ENCODE measurements at regions of chr12 and their contacts with region 1.

Region 1: GRCh38 chr12:12562585-12563261 is at the start of gene DUSP16:
- DNase-seq: peak; percentile 87 to 92
- ATAC-seq: peak; percentile 88 to 89
- H3K4me3 ChIP-seq: peak within 1 kb of the TSS; percentile 64 to 90 (median 76)
- H3K27ac ChIP-seq: peak within 1 kb of the TSS; percentile 89 to 100 (median 98)
- H3K4me1 ChIP-seq: peaks cover 22 to 29% of the 10 kb centered on the region in 2 donors
- H3K27me3 ChIP-seq: no peaks in the 10 kb centered on the region
- CTCF ChIP-seq: peak in 2 of 5 experiments; percentile 19 to 46
- POLR2A ChIP-seq: peak; percentile 86 to 94
- total RNA-seq, gene DUSP16: 10.9 to 15.7 (median 13.3) TPM

Region 2: GRCh38 chr12:10716704-10717315 is 1845.9 kb before region 1 on chr12:
- in situ Hi-C with region 1: no loop called
- intact Hi-C with region 1: loop called (anchors 5 kb)
- DNase-seq: peak; percentile 91 to 92
- ATAC-seq: peak; percentile 60 to 63
- H3K4me3 ChIP-seq: peak overlapping the region; percentile 62 to 99 (median 87)
- H3K27ac ChIP-seq: peak overlapping the region; percentile 97 to 100 (median 98)
- H3K4me1 ChIP-seq: peaks cover 48 to 68% of the 10 kb centered on the region in 2 donors
- H3K27me3 ChIP-seq: no peaks in the 10 kb centered on the region
- CTCF ChIP-seq: no peak
- POLR2A ChIP-seq: peak; percentile 75 to 95

Region 3: DNA sequence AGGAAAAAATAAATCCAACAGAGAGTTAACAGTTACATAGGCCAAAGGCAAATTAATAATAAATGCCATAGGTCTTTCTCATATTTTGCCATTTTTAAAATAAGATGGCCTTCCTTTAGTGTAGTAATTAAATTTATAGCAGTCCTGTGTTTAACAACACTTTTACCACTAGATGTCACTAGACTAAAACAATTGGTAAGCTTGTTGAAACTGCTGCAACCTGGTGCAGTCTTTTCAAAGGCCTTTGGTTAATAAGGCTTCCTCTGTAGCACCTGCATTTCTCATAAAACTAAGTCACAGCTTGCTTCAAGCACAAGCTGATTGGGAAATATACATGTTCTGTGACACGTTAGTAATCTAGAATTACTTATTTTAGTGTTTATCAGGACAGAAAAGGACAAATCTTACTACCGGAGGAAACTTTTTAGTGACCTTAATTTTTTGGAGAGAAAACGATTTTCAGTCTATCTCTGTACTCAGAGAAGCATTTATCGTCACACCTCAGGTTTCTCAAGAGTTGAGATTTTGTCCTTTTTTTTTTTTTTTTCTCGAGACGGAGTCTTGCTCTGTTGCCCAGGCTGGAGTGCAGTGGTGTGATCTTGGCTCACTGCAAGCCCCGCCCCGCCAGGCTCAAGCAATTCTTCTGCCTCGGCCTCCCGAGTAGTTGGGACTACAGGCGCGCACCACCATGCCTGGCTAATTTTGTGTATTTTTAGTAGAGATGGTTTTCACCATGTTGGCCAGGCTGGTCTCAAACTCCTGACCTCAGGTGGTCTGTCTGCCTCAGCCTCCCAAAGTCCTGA is 185.9 kb before region 1 on chr12:
- in situ Hi-C with region 1: loop called (anchors 5 to 10 kb)
- intact Hi-C with region 1: loop called (anchors 1 kb)
- DNase-seq: no peak
- ATAC-seq: peak; percentile 83 to 98
- H3K4me3 ChIP-seq: no peak overlapping the region
- H3K27ac ChIP-seq: no peak overlapping the region
- H3K4me1 ChIP-seq: peaks cover 0 to 12% of the 10 kb centered on the region in 2 donors
- H3K27me3 ChIP-seq: no peaks in the 10 kb centered on the region
- CTCF ChIP-seq: peak; percentile 65 to 86 (median 71)
- POLR2A ChIP-seq: no peak

Region 4: DNA sequence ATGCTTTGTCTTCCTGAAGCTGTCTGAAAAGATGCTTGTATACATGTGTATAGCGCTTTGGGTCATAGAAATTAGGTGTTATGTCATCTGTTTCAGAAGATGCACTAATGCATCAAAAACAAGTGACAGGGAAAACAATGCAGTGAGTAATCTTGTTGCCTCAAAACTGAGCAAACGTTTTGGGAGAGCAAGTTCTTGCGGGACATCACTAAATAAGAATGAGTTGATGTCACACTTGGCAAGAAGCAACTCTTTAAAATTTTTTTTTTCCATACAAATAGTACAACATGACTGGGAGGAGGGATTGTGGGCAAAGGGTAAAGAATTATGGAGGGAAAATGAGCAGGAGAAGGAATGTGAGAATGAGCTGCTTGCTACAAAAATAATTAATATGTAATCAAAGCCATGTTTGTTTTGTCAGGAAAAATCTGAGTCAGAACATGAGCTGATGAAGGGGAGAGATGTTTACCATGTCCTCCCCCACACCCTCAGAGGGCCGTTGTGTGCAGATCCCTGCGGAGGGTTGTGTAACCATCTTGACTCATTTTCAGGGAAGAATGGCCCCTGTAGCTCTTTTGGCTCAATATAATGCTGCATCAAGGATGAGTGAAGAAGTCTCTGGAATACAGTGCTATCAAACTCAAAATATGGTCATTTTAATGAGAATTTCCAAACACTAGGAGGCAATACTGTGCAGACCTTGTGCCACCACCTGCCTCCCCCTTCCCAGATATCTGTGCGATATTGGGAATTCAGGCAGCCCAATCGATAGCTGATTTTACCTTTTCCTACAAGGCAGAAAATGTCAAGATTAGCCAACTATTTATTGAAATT is 164.5 kb before region 1 on chr12:
- in situ Hi-C with region 1: no loop called
- intact Hi-C with region 1: loop called (anchors 5 kb)
- DNase-seq: peak; percentile 52 to 70
- ATAC-seq: peak; percentile 89 to 93
- H3K4me3 ChIP-seq: no peak overlapping the region
- H3K27ac ChIP-seq: peak overlapping the region; percentile 61 to 72 (median 64)
- H3K4me1 ChIP-seq: peaks cover 10 to 17% of the 10 kb centered on the region in 2 donors
- H3K27me3 ChIP-seq: no peaks in the 10 kb centered on the region
- CTCF ChIP-seq: no peak
- POLR2A ChIP-seq: no peak

Region 5: DNA sequence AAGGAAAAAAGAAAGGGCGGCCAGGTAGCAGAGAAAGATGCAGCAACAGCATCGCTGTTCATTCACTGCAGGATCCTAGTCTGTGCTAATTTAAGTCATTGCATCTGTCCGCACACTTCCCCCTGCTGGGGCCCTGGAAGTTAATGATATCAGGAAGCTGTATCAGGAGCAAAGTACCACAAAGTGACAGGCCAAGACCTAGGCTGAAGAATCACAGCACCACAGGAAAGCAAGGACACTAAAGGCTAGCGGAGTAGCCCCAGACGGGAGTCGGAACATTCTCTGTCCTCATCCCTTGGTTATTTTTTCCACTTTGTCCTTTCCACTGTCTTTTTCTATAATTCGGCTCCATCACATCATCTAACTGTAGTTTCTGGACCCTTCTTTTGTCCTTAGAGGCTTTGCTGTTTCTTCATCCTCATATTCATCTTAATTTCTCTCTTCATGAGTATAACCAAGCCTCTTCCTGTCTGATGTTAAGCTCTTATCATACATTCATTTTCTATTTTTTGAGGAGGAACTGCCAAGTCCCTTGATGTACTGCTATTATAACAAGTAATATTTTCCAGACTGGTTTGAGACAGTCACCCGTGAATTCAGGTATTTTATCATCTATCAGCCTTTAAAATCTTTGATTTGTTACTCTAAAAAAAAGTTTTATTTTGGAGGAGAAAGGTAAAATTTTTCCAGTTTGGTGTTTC is 28.4 kb before region 1 on chr12:
- in situ Hi-C with region 1: no loop called
- intact Hi-C with region 1: loop called (anchors 2 kb)
- DNase-seq: no peak
- ATAC-seq: peak in 1 of 2 donors; percentile 16
- H3K4me3 ChIP-seq: no peak overlapping the region
- H3K27ac ChIP-seq: peak overlapping the region; percentile 73 to 85 (median 82)
- H3K4me1 ChIP-seq: peaks cover 68 to 77% of the 10 kb centered on the region in 2 donors
- H3K27me3 ChIP-seq: no peaks in the 10 kb centered on the region
- CTCF ChIP-seq: no peak
- POLR2A ChIP-seq: no peak

Region 6: DNA sequence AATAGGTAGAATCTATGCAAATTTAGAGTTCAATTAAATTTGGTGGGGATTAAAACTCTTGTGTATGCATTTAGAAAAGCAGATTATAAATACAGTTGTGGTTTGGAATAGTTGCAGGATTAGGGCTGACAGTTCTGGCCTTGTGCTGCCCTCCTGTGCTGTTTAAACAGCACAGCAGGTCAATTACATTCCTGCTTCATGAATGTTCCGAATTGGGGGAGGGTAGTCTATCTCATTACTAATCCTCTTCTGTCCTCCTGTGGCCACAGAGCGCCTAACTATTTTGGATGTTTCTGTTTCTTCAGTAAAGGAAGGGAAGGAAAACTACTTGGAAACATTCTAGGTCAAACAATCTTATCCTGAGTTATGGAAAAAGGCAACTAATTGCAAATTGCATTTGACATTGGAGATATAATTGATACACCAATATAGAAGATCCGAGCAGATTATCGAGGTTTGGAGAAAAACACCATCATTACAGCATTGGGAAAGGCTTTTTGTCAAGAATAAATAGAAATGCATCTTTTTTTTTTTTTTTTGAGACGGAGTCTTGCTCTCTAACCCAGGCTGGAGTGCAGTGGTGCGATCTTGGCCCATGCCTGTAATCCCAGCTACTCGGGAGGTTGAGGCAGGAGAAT is 142.0 kb after region 1 on chr12:
- in situ Hi-C with region 1: no loop called
- intact Hi-C with region 1: loop called (anchors 2 kb)
- DNase-seq: peak in 1 of 2 donors; percentile 46
- ATAC-seq: peak; percentile 100
- H3K4me3 ChIP-seq: no peak overlapping the region
- H3K27ac ChIP-seq: no peak overlapping the region
- H3K4me1 ChIP-seq: no peaks in the 10 kb centered on the region
- H3K27me3 ChIP-seq: no peaks in the 10 kb centered on the region
- CTCF ChIP-seq: peak; percentile 75 to 98 (median 83)
- POLR2A ChIP-seq: no peak

Measured in gastrocnemius medialis (tissue), 4 donors.